Posterior cingulate gyrus (tissue), 11 donors: ENCODE measurements at regions of chr11 and their contacts with region 1.

Region 1: GRCh38 chr11:57249384-57250319 is 12.6 kb upstream of the APLNR start:
- DNase-seq: peak in 9 of 10 donors; percentile 52 to 94 (median 68)

Region 2: DNA sequence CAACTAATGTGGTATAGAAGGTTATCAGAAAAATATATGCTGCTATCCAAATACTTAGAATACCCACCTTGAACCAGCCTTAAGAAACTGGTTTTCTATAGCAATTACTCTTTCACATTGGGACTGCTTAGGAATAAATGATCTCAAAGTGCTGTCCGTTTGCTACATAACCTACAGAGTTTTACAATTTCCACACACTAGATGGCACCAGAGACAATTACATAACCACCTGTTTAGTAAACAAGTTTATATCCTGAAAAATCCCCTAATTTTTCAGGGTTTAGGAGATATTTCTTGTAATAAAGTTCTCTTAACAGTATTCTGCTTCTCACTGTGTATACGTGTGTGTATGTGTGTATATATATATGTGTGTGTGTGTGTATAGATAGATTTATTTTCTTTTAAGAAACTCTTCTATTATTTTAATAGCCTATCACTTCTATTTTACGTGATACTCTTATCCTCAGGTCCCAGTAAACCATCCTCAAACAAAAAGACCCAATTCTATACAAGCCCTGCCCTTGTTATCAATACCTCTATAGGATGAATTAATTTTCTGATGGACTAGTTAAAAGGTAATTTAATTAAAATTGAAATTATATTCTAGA is 1306.8 kb before region 1 on chr11:
- intact Hi-C with region 1: loop called (anchors 10 kb)
- DNase-seq: no peak

Region 3: GRCh38 chr11:56841210-56841810 is 408.3 kb before region 1 on chr11:
- intact Hi-C with region 1: loop called (anchors 1 kb)
- DNase-seq: peak in 7 of 10 donors; percentile 11 to 88 (median 34)

Region 4: GRCh38 chr11:57116654-57117053 is 133.0 kb before region 1 on chr11:
- intact Hi-C with region 1: loop called (anchors 5 kb)
- DNase-seq: peak in 1 of 10 donors; percentile 77

Region 5: GRCh38 chr11:57131080-57131790 is 118.4 kb before region 1 on chr11:
- intact Hi-C with region 1: loop called (anchors 5 kb)
- DNase-seq: peak in 2 of 10 donors; percentile 20 to 22